ENCODE measurements at regions of chr2 and their contacts with region 1.

Region 1: DNA sequence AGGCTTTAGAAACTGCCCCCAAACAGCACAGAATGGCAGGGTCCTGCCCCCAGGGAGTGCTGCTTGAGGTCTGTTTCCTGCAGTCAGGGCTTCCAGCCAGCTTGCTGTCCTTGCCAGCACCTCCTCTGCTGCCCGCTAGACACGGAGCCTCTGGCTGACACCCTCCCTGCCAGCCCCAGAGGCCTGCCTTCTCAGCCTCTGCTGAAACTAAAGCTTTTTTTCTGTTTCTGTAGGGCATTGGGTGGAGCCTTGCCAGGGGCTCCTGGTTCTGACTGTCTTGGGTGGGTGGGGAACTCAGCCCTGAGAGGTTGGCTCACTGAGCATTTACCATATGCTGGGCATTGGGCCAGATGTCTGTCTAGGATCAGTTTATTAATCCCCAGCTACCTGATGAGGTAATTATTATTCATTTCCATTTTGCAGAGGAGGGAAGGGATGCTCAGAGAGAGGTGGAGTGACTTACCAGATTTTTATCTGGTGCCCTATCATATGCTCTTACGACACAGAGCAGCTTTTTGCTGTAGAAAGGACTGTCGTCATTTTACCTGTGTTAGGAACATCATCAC is 35.4 kb downstream of the INPP4A start:
- DNase-seq: no peak
- H3K4me3 Mint-ChIP-seq: peak overlapping the region; percentile 38
- H3K27ac Mint-ChIP-seq: peak overlapping the region; percentile 84
- H3K4me1 Mint-ChIP-seq: peaks cover 87% of the 10 kb centered on the region
- H3K27me3 Mint-ChIP-seq: no peaks in the 10 kb centered on the region

Region 2: GRCh38 chr2:98412751-98413458 is 67.1 kb before region 1 on chr2:
- intact Hi-C with region 1: loop called (anchors 1 kb)
- DNase-seq: peak; percentile 43
- H3K4me3 Mint-ChIP-seq: no peak overlapping the region
- H3K27ac Mint-ChIP-seq: no peak overlapping the region
- H3K4me1 Mint-ChIP-seq: peaks cover 8% of the 10 kb centered on the region
- H3K27me3 Mint-ChIP-seq: peaks cover 9% of the 10 kb centered on the region

Region 3: DNA sequence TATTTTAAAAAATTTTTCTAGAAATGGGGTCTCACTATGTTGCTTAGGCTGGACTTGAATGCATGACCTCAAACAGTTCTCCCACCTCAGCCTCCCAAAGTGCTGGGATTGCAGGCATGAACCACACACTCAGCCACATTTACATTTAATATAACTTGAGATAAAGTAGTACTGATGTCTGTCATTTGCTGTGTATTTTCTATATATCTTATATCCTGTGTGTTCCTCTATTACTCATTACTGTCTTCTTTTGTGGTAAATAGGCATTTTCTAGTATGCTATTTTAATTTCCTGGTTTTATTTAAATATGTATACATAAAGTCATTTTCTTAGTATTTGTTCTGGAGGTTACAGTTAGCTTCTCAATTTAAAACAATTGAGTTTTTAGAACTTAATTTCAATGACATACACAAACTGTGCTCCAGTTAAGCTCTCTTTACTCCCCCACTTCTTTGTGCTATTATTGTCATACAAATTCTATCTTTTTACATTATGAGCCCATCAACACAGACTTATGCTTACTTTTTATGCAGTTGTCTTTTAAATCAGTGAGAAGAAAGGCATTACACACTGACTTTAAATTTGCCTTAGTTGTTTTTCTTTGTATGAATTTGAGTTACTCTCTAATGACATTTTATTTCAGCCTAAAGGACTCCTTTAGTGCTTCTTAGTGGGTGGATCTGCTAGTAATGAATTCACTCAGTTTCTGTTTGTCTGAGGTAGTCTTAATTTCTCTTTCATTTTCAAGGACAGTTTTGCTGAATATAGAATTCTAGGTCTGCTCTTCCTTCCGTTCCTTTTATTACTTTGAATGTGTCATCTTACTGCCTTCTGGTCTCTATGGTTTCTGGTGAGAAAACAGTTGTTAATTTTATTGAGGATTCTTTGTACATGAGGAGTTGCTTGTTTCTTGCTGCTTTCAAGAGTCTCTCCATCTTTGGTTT is 41.6 kb before region 1 on chr2:
- intact Hi-C with region 1: loop called (anchors 2 kb)
- DNase-seq: peak; percentile 4
- H3K4me3 Mint-ChIP-seq: peak overlapping the region; percentile 61
- H3K27ac Mint-ChIP-seq: peak overlapping the region; percentile 93
- H3K4me1 Mint-ChIP-seq: peaks cover 25% of the 10 kb centered on the region
- H3K27me3 Mint-ChIP-seq: no peaks in the 10 kb centered on the region

Region 4: DNA sequence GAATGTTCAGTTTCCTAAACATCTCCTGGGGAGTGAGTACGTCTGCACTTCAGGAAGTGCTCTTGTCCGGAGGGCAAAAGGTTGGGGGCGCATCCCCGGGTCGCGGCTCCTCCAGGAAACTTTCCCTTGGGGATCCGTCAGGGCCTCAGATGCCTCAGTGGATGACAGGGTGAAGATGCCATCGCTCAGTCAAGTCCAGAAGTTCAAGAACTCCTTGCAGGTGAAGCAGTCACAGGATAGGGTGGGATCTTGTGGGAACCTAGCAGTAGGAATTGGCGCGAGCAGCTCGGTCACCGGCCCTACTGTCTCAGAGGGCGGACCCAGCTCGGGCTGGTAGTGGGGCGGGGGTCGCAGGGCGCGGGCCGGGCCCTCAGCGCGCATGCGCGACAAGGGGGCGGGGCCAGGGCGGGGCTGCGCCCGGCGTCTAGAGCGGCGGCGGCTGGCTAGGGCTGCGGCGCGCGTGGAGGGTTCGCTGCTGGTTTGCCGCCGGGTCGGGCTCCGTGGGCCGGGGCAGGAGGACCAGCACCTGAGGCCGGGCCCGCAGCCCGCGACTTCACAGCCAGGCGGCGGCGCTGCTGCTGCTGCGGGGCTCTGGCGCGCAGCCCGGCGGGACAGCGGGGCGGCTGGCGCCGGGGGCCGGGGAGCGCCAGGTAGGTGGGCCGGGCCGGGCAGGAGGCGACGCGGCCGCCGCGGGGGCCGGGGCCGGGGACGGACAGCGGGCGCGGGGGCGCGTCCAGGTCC is 35.4 kb before region 1 on chr2 and contains the start of gene INPP4A:
- intact Hi-C with region 1: loop called (anchors 1 kb)
- DNase-seq: peak; percentile 70
- H3K4me3 Mint-ChIP-seq: peak within 1 kb of the TSS; percentile 86
- H3K27ac Mint-ChIP-seq: peak within 1 kb of the TSS; percentile 86
- H3K4me1 Mint-ChIP-seq: peaks cover 37% of the 10 kb centered on the region
- H3K27me3 Mint-ChIP-seq: no peaks in the 10 kb centered on the region
- total RNA-seq, gene INPP4A: 35.9 and 40.2 TPM in 2 replicates

Region 5: DNA sequence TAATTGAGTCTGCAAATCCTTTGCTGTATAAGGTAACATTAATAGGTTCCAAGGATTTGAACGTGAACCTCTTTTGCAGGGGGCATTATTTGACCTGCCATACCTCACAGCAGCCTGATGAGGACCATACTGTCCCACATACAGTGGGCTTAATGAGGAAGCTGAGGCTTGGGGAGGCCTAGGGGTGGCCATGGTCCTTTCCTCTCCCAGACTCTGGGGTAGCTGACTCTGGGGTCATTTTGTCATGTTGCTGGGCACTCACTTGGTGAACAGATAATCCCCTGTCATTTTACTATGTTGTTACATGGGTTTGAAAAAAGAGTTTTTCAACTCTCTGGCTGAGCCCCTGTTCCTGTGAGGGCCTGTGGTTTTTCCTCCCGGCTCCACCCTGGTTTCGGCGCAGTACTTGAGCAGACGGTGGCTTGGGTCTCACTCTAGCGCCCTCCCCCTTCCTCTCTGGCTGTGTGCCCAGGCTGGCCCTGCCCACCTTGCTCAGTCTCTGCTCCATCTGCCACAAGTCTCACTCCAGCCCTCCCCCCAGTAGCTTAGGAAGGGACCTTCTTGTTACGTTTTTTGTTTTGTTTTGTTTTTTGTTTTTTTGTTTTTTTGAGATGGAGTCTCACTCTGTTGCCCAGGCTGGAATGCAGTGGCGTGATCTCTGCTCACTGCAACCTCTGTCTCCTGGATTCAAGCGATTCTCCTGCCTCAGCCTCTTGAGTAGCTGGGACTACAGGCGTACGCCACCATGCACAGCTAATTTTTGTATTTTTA is 14.4 kb before region 1 on chr2:
- intact Hi-C with region 1: loop called (anchors 1 kb)
- DNase-seq: peak; percentile 73
- H3K4me3 Mint-ChIP-seq: peak overlapping the region; percentile 77
- H3K27ac Mint-ChIP-seq: peak overlapping the region; percentile 95
- H3K4me1 Mint-ChIP-seq: peaks cover 82% of the 10 kb centered on the region
- H3K27me3 Mint-ChIP-seq: no peaks in the 10 kb centered on the region

Region 6: DNA sequence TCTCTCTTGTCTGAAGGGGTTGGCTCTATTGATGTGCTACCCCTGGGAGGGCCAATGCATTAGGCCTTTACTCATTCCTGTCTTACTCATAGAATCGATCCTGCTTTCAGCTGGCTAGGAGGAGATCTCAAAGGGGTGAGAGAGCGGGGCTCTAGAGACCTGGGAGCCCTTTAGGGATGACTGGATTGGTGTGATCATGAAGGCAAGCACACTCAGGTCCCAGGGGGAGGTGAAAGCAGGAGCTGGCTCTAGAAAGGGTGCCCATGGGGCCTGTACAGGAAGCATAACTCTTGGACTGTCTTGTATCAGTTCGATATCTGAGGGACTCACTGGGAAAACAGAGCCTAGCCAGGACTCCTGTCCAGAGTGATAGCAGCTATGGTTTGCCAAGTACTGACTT is 12.4 kb after region 1 on chr2:
- intact Hi-C with region 1: no loop called
- DNase-seq: no peak
- H3K4me3 Mint-ChIP-seq: no peak overlapping the region
- H3K27ac Mint-ChIP-seq: no peak overlapping the region
- H3K4me1 Mint-ChIP-seq: peaks cover 20% of the 10 kb centered on the region
- H3K27me3 Mint-ChIP-seq: no peaks in the 10 kb centered on the region

Region 7: DNA sequence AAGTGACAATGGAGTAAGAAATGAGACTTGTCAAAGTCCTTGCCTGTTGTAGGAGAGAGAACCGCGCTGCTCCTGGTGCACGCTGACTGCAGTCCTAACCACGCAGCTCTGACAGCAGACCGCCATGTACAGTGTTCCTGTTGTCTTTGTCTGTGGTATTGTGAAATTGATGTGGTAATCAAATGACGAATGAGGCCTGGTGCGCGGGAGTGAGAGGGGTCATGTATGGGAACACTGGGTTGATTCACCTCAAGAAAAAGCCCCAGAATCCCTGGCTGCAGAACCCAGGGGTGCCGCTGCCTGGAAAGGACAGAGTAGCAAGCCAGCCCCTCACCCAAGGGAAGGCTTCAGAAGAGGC is 28.6 kb after region 1 on chr2:
- intact Hi-C with region 1: loop called (anchors 2 kb)
- DNase-seq: peak; percentile 25
- H3K4me3 Mint-ChIP-seq: peak overlapping the region; percentile 27
- H3K27ac Mint-ChIP-seq: peak overlapping the region; percentile 65
- H3K4me1 Mint-ChIP-seq: peaks cover 67% of the 10 kb centered on the region
- H3K27me3 Mint-ChIP-seq: no peaks in the 10 kb centered on the region

Region 8: GRCh38 chr2:98552499-98553179 is 72.6 kb after region 1 on chr2:
- intact Hi-C with region 1: loop called (anchors 5 kb)
- DNase-seq: no peak
- H3K4me3 Mint-ChIP-seq: no peak overlapping the region
- H3K27ac Mint-ChIP-seq: peak overlapping the region; percentile 51
- H3K4me1 Mint-ChIP-seq: peaks cover 41% of the 10 kb centered on the region
- H3K27me3 Mint-ChIP-seq: no peaks in the 10 kb centered on the region

Measured in activated T-helper 2 cell treated with anti-CD3 and anti-CD28 coated beads, Interferon-gamma antibody, Interleukin-2, Interleukin-4, amounts not matched to agents 10 μg/mL and 5 μg/mL and 100 μg/mL, durations not matched to agents 14 hours and 24 hours and 36 hours (primary cell).